ENCODE measurements at regions of chr11 and their contacts with region 1.

Region 1: DNA sequence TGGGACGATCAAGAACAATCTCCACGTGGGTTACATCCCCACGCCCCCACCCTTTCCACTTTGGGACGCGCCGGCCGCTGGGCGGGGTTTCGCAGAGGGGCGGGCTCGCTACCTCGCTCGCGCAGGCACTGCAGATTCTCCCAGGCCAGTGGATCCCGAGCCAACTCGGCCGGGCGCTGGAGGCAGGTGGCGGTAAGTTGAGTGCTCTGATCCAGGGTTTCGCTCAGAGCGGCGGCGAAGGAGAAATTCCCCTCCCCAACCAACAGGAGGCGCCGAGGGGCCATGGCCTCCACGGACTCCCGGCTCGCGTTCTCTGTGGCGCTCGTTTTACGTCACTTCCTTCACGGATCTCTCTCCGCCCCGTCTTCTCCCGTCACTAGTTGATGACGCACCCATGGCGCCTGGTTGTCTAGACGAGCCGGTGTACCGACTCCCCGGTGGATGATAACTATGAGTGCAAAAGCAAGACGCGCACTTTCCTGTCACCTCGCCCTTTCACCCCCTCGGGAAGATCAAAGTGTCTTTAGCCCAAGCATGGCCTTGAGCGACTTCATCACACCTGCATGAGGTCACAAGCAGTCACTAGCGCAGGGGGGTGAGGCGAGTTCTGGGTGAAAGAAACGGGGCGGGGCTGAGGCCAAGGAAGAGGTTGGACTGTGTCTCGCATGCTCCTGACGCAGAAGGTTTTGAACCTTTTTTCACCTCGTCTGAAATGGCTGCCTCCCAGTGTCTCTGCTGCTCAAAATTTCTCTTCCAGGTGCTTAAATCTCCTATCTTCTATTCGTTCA is at the starts of genes CFAP68 and FDXACB1:
- DNase-seq: peak; percentile 96
- H3K4me3 ChIP-seq: peak within 1 kb of the TSS; percentile 65
- H3K27ac ChIP-seq: peak within 1 kb of the TSS; percentile 88
- H3K4me1 ChIP-seq: peaks cover 10% of the 10 kb centered on the region
- H3K27me3 ChIP-seq: no peaks in the 10 kb centered on the region
- CTCF ChIP-seq: peak; percentile 97
- total RNA-seq, gene CFAP68: 27.4 and 46.8 TPM in 2 replicates
- total RNA-seq, gene FDXACB1: 2.1 and 2.2 TPM in 2 replicates

Region 2: GRCh38 chr11:111846636-111847035 is 32.4 kb before region 1 on chr11:
- CTCF ChIA-PET with region 1: no interaction called
- POLR2A ChIA-PET with region 1: interaction called, 3 read pairs
- intact Hi-C with region 1: loop called (anchors 2 kb)
- DNase-seq: peak; percentile 27 to 88
- H3K4me3 ChIP-seq: peak overlapping the region; percentile 27
- H3K27ac ChIP-seq: peak overlapping the region; percentile 98
- H3K4me1 ChIP-seq: peaks cover 90% of the 10 kb centered on the region
- H3K27me3 ChIP-seq: no peaks in the 10 kb centered on the region
- CTCF ChIP-seq: 0 out of 2 replicates have a peak, but pooled peaks have one; percentile 1

Region 3: GRCh38 chr11:111926505-111927391 is 47.7 kb after region 1 on chr11:
- CTCF ChIA-PET with region 1: interaction called, 3 read pairs
- POLR2A ChIA-PET with region 1: no interaction called
- intact Hi-C with region 1: loop called (anchors 1 kb)
- DNase-seq: peak; percentile 93 to 98
- H3K4me3 ChIP-seq: peak overlapping the region; percentile 59
- H3K27ac ChIP-seq: peak overlapping the region; percentile 62
- H3K4me1 ChIP-seq: peaks cover 36% of the 10 kb centered on the region
- H3K27me3 ChIP-seq: no peaks in the 10 kb centered on the region
- CTCF ChIP-seq: no peak

Region 4: DNA sequence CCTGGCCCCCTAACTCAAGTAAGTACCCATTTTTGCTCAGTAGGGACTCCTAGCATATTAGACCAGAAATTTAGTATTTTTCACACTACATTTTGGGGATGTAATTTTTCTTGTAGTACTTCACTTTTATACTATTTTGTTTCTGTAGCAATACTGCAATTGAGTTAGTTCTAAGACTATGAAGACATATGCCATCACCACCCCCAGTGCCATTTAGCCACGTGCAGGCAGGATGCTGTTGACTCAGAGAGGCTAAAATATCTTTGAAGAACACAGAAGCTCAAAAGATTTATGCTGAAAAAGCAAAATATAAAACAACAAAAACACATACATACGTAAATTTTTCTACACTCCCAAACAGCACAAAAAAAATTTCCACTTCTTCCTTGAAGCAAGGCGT is 117.1 kb after region 1 on chr11:
- CTCF ChIA-PET with region 1: no interaction called
- POLR2A ChIA-PET with region 1: no interaction called
- intact Hi-C with region 1: loop called (anchors 5 kb)
- DNase-seq: no peak
- H3K4me3 ChIP-seq: no peak overlapping the region
- H3K27ac ChIP-seq: no peak overlapping the region
- H3K4me1 ChIP-seq: 0 out of 2 replicates have a peak, but pooled peaks cover 3% of the 10 kb centered on the region
- H3K27me3 ChIP-seq: no peaks in the 10 kb centered on the region
- CTCF ChIP-seq: no peak

Region 5: GRCh38 chr11:112163875-112164685 is 285.0 kb after region 1 on chr11 and contains the start of gene IL18:
- CTCF ChIA-PET with region 1: no interaction called
- POLR2A ChIA-PET with region 1: no interaction called
- intact Hi-C with region 1: loop called (anchors 10 kb)
- DNase-seq: peak; percentile 75 to 89
- H3K4me3 ChIP-seq: peak within 1 kb of the TSS; percentile 68
- H3K27ac ChIP-seq: peak within 1 kb of the TSS; percentile 87
- H3K4me1 ChIP-seq: peaks cover 75% of the 10 kb centered on the region
- H3K27me3 ChIP-seq: no peaks in the 10 kb centered on the region
- CTCF ChIP-seq: no peak
- total RNA-seq, gene IL18: 42.8 and 59.1 TPM in 2 replicates